ENCODE measurements at regions of chr5 and their contacts with region 1.

Region 1: GRCh38 chr5:55159763-55160492 is at the start of gene GPX8:
- DNase-seq: peak; percentile 77
- ATAC-seq: peak; percentile 91
- H3K4me3 ChIP-seq: peak within 1 kb of the TSS; percentile 63 to 77
- H3K27ac ChIP-seq: peak within 1 kb of the TSS; percentile 52
- H3K4me1 ChIP-seq: peaks cover 0 to 19% of the 10 kb centered on the region in 2 experiments; a peak in 2 of 4 replicates
- H3K27me3 ChIP-seq: no peaks in the 10 kb centered on the region
- CTCF ChIP-seq: peak; percentile 44 to 83 (median 81); a peak in 5 of 6 replicates
- POLR2A ChIP-seq: peak; percentile 80
- RAD21 ChIP-seq: peak; percentile 90
- total RNA-seq, gene GPX8: 36.5 TPM

Region 2: GRCh38 chr5:54844905-54845566 is 314.9 kb before region 1 on chr5:
- CTCF ChIA-PET with region 1: interaction called, 13 read pairs
- POLR2A ChIA-PET with region 1: no interaction called
- RAD21 ChIA-PET with region 1: no interaction called
- intact Hi-C with region 1: no loop called
- DNase-seq: peak; percentile 31
- ATAC-seq: no peak
- H3K4me3 ChIP-seq: no peak overlapping the region
- H3K27ac ChIP-seq: no peak overlapping the region
- H3K4me1 ChIP-seq: no peaks in the 10 kb centered on the region
- H3K27me3 ChIP-seq: no peaks in the 10 kb centered on the region
- CTCF ChIP-seq: peak; percentile 23 to 66 (median 64); a peak in 3 of 6 replicates
- POLR2A ChIP-seq: no peak
- RAD21 ChIP-seq: peak; percentile 72

Region 3: GRCh38 chr5:54905943-54906537 is 253.9 kb before region 1 on chr5:
- CTCF ChIA-PET with region 1: interaction called, 139 read pairs
- POLR2A ChIA-PET with region 1: interaction called, 12 read pairs
- RAD21 ChIA-PET with region 1: interaction called, 5 to 10 read pairs
- intact Hi-C with region 1: loop called (anchors 1 kb)
- DNase-seq: peak; percentile 44
- ATAC-seq: peak; percentile 62
- H3K4me3 ChIP-seq: no peak overlapping the region
- H3K27ac ChIP-seq: no peak overlapping the region
- H3K4me1 ChIP-seq: no peaks in the 10 kb centered on the region
- H3K27me3 ChIP-seq: peaks cover 69% of the 10 kb centered on the region
- CTCF ChIP-seq: peak; percentile 55 to 79 (median 75)
- POLR2A ChIP-seq: no peak
- RAD21 ChIP-seq: peak; percentile 77

Region 4: DNA sequence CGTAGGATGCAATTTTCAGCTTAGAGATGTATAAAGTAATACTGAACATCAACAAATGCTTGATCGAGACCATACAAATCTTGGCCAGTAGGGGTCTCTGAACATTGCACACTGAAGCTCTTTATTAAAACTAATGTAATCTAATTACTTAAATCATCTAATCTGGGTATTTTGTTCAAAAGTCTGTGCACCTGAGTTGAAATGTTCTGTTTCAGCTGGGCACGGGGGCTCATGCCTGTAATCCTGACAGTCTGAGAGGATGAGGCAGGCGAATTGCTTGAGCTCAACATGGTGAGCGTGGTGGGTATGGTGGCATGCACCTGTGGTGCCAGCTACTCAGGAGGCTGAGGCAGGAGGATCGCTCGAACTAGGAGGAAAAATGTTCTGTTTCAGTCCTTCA is 215.6 kb before region 1 on chr5:
- CTCF ChIA-PET with region 1: interaction called, 37 read pairs
- POLR2A ChIA-PET with region 1: no interaction called
- RAD21 ChIA-PET with region 1: interaction called in 1 of 2 experiments, 3 read pairs
- intact Hi-C with region 1: no loop called
- DNase-seq: peak; percentile 12
- ATAC-seq: peak; percentile 73
- H3K4me3 ChIP-seq: no peak overlapping the region
- H3K27ac ChIP-seq: no peak overlapping the region
- H3K4me1 ChIP-seq: no peaks in the 10 kb centered on the region
- H3K27me3 ChIP-seq: peaks cover 7% of the 10 kb centered on the region; the same call in 1 of the 2 replicates
- CTCF ChIP-seq: peak; percentile 38 to 74 (median 59); a peak in 5 of 6 replicates
- POLR2A ChIP-seq: no peak
- RAD21 ChIP-seq: peak; percentile 46

Measured in HCT116 (cell line).